Dorsolateral prefrontal cortex (tissue), 120 donors: ENCODE measurements at regions of chrX and their contacts with region 1.

Region 1: DNA sequence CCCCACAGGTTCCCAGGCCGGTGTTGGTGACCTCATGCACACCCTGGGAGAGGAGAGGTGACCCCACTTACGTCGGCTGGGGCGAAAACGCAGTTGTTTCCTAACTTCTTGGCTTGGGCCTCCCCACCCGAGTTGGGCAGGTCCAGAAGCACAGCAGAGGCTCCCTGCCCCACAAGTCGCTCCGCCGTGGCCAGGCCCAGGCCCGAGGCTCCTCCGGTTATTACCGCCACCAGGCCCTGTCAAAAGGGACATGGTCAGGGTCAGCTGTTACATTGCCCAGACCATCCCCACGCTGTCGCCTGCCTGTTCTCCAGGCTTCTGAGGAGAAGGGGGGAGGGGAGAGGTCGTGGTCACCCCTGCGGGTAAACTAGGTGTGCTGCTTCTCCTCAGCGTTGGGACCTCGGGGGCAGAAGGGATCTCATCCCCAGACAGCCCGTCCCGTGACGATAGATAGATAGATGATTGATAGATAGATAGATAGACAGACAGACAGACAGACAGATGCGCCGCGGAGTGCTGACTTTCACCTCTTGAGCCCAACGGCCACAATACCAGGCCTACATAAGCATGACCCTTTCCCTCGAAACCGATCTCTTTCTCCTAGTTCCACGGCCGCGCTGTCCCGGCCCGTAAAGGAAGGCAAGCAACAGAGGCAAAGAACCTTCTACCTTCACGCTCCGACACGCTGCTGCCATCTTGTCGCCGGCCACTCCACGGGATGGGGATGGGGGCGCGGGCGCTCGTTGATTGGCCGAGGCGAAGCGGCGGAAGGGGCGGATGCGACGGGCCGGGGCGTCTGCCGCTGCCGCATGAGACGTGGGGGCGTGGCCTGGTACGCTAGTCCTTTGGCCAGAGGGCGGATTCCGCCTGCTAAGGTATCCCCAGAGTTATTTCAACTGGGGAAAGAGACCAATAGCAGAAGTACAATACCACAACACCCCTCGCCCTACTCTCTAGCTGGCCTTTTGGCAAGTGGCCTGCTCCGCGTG is at the start of gene HSD17B10:
- DNase-seq: peak; percentile 76 to 92 (median 86)
- H3K4me3 ChIP-seq: peak within 1 kb of the TSS; percentile 37 to 79 (median 66)
- H3K27ac ChIP-seq: peak within 1 kb of the TSS in 51 of 59 donors; percentile 1 to 78 (median 54)
- H3K27me3 ChIP-seq: peaks cover 0 to 77% (median 16%) of the 10 kb centered on the region in 45 donors
- CTCF ChIP-seq: peak in 13 of 56 donors; percentile 8 to 39 (median 20)
- total RNA-seq, gene HSD17B10: 22.4 to 65.1 (median 33.5) TPM

Region 2: DNA sequence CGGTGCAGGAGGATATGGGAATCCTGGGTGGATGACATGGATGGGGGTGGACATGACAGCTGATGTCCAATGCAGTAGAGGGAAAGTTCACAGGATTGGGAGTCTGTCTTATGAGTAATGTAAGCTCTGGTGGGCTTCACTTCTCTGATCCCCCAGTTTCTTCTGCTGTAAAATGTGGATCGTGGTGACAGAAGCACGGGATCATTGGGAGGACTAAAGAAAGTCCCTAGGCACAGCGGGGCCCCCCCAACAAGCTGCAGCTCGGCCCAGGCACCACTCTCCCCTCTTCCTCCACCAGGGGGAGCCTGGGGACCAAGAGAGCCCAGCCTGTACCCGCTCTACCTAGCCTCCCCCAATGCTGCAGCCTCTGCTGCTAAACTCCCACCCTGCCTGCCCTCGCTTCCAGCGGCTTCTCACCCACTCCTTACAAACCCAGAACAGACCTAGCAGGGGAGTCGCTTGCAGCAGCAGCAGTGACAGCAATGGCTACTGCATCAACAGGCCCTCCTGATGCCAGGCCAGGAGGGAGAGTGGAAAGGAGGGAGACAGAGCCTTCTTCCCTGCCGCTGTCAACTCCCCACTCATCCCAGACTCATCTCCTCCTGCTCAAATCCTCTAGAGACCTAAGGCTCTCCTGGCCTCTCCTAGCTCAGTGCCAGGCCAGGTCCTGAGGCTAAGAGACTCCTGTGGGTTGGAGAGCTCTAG is 116.4 kb before region 1 on chrX:
- intact Hi-C with region 1: loop called (anchors 5 kb)
- DNase-seq: peak; percentile 64 to 87 (median 78)
- H3K4me3 ChIP-seq: peak overlapping the region in 53 of 59 donors; percentile 10 to 76 (median 65)
- H3K27ac ChIP-seq: peak overlapping the region in 9 of 59 donors; percentile 0 to 46 (median 12)
- H3K27me3 ChIP-seq: peaks cover 0 to 89% (median 32%) of the 10 kb centered on the region in 45 donors
- CTCF ChIP-seq: peak in 55 of 56 donors; percentile 55 to 90 (median 83)

Region 3: GRCh38 chrX:53616946-53617345 is 183.0 kb after region 1 on chrX:
- intact Hi-C with region 1: no loop called
- DNase-seq: no peak
- H3K4me3 ChIP-seq: no peak overlapping the region
- H3K27ac ChIP-seq: peak overlapping the region in 4 of 59 donors; percentile 5 to 50 (median 16)
- H3K27me3 ChIP-seq: peaks cover 0 to 59% (median 10%) of the 10 kb centered on the region in 45 donors
- CTCF ChIP-seq: no peak

Region 4: GRCh38 chrX:54182864-54183608 is 749.1 kb after region 1 on chrX and contains the start of gene FAM120C:
- intact Hi-C with region 1: loop called in 1 of 2 experiments (anchors 10 kb)
- DNase-seq: peak; percentile 32 to 67 (median 50)
- H3K4me3 ChIP-seq: peak within 1 kb of the TSS; percentile 34 to 86 (median 71)
- H3K27ac ChIP-seq: peak within 1 kb of the TSS in 57 of 59 donors; percentile 49 to 94 (median 84)
- H3K27me3 ChIP-seq: peaks cover 0 to 59% (median 13%) of the 10 kb centered on the region in 45 donors
- CTCF ChIP-seq: no peak
- total RNA-seq, gene FAM120C: 18.9 to 33.3 (median 25.4) TPM